HepG2 (cell line): ENCODE measurements at regions of chr7 and their contacts with region 1.

Region 1: GRCh38 chr7:12244129-12244528 is 33.0 kb downstream of the TMEM106B start:
- DNase-seq: peak; percentile 43
- ATAC-seq: peak; percentile 100
- H3K4me3 ChIP-seq: no peak overlapping the region
- H3K27ac ChIP-seq: no peak overlapping the region
- H3K4me1 ChIP-seq: no peaks in the 10 kb centered on the region
- H3K27me3 ChIP-seq: no peaks in the 10 kb centered on the region
- CTCF ChIP-seq: peak; percentile 74
- EP300 ChIP-seq: no peak
- POLR2A ChIP-seq: no peak
- RAD21 ChIP-seq: peak; percentile 64

Region 2: DNA sequence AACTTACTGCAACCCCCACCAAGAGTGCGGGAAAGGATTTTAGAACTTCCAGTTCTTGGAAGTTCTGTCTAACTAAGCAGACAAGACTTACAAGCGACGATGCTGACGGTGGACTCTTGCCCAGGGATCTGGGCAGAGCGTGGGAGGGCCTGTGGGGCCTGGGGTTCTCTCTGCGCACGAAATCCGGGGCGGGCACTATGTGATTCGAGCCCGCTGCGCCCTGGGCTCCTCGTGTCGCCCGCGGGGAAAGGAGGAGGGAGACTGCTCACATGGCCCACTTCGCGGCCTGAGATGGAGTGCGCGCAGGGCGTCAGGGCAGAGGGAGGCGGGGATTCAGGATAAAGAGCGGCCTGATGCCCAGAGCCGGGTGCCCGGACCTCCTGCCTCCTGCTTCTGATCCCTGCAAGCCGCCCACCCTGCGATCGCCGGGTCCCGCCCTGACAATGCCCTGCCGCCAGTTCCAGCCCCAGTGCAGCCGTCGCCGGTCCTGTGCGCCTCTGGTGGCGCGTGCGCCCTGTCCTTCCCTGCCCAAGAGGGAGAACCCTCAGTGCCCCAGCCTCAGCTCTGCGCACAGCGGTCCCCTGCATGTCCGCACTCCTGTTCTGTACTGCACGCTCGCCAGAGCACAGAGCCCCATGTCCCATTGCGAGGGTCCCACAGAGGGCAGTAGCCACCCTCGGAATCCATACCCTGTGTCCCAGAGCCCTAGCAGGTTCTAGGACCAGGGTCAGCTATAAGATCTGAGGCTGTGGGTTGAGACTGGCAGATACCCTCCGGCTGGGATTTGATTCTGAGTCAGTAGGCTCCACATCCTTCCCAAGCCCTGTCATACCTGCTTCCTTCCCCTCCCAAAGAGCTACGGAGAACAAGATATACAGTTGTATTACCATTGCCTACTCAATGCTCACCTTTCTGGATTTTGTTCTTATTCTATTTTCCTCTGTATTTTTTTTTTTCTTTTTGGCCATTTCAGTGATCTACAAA is 132.4 kb before region 1 on chr7:
- CTCF ChIA-PET with region 1: no interaction called
- POLR2A ChIA-PET with region 1: no interaction called
- in situ Hi-C with region 1: no loop called
- intact Hi-C with region 1: loop called (anchors 1 kb)
- DNase-seq: no peak
- ATAC-seq: peak; percentile 72
- H3K4me3 ChIP-seq: no peak overlapping the region
- H3K27ac ChIP-seq: no peak overlapping the region
- H3K4me1 ChIP-seq: peaks cover 8% of the 10 kb centered on the region; the same call in 1 of the 2 replicates
- H3K27me3 ChIP-seq: no peaks in the 10 kb centered on the region
- CTCF ChIP-seq: peak; percentile 47
- EP300 ChIP-seq: no peak
- POLR2A ChIP-seq: no peak
- RAD21 ChIP-seq: no peak

Region 3: DNA sequence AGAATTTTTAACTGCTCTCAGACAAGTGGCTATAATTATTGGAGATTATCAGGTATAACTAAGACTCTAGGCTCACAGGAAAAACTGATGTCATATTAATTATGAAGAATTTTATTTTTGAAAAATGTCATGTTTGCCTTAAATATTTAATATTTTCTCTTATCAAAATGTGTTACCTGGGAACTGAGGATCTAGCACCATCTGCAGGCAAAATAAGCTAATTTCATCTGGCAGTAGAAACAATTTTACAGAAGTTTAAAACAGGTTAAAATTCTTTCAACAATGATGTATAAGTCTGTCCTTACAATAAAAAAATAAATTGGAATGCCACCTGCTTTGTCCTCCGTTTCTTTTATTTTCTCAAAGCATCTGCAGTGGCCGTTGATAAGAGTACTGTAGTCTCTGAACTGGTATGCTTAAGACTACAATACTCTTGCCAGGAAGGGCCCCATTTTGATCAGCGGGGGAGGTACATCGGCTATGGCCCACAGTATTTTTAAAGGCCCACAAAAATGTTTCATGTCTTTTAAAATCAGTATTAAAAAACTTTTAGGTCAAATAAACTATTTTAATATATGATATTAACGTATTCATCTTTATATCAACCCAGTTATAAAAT is 78.3 kb after region 1 on chr7:
- CTCF ChIA-PET with region 1: interaction called, 3 read pairs
- POLR2A ChIA-PET with region 1: no interaction called
- in situ Hi-C with region 1: no loop called
- intact Hi-C with region 1: loop called (anchors 2 kb)
- DNase-seq: peak; percentile 3
- ATAC-seq: no peak
- H3K4me3 ChIP-seq: no peak overlapping the region
- H3K27ac ChIP-seq: no peak overlapping the region
- H3K4me1 ChIP-seq: no peaks in the 10 kb centered on the region
- H3K27me3 ChIP-seq: no peaks in the 10 kb centered on the region
- CTCF ChIP-seq: peak; percentile 57
- EP300 ChIP-seq: no peak
- POLR2A ChIP-seq: no peak
- RAD21 ChIP-seq: no peak